Left ventricle myocardium superior (tissue), 1 donor: ENCODE measurements at regions of chr17 and their contacts with region 1.

Region 1: DNA sequence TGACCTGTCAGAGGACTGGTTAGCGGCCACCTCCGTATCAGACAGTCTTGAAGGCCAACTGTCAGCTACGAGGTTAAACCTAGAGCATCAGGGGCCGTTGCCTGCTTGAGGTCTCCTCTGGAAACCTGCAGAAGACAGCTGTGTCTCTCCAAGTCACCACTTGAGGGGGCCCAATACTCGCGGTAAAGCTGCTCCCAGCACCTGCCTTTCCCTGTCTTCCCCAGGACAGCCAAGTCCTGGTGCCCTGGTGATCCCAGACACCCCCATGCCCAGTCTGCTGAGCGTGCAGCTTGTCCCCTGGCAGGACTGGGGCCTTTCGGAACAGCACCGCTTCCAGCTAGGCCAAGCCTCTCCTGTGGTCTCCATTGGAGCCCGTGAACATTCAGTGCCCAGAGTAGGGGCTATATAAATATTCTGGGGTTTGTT is 80.1 kb downstream of the DNAH17 start:
- DNase-seq: peak; percentile 67
- ATAC-seq: peak; percentile 91

Region 2: GRCh38 chr17:78365561-78366108 is 131.5 kb before region 1 on chr17:
- intact Hi-C with region 1: no loop called
- DNase-seq: no peak
- ATAC-seq: peak; percentile 29

Region 3: DNA sequence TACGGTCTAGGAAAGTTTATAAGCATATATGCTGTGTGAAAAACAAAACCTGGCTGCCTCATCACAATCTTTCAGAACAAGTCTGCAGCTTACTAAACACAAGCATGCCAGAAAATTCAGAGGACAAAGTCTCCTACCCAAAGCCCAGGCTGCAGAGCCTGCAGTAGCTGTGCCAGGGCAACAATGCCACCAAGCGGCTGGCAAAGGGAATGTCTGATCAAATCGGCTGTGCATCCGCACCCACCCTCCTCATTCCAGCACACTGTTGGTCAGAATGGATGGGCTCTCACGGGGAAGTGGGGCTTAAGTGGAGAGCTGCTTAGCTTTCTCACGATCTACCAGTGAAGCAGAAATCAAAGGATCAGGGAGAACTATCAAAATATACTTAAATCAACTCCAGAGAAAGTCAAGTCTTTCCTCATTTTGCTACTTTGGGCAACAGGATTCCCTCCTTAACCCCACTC is 211.4 kb after region 1 on chr17:
- intact Hi-C with region 1: loop called (anchors 2 kb)
- DNase-seq: peak; percentile 75
- ATAC-seq: peak; percentile 83